ENCODE measurements at regions of chr11 and their contacts with region 1.

Region 1: DNA sequence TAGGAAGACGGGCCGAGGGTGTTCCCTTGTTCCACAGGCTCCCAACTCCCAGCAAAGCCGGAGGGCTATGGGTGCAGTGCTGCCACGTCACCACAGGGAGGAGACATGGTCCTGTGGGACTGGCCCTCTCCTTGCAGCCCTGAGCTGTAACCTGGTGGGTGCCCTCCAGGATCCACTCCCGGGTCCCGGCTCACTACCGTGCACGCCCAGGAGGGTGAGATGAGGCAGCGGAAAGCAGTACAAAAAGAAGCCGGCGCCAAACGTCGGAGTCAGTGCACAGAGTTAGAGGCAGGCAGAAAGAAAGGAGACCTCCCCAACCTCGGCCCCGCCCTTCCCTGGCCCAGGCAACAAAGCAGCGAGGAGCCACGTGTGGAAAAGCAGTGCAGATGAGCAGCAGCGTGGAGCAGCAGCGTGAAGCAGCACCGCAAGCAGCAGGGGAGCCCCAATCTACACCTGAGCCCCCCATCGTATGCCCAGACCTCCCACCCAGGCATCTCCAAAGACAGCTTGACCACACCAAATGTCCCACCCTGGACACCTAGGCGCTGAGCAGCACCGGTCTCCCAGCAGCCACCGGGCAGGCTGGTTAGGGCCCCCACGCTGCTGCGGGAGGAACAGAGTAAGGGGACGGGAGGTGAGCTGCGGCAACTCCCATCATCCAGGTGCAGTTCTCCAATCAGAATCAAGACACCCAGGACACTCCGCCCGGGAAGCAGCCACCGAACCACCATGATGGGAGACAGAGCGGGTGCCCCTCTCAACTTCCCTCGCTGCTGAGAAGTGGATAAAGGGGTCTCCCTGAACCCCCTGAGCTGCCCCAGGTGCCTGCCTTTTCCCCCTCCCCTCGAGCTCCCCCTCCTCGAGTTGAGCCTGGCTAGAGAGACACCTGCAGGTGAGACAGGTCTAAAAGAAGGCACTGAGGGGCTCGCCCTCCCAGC is 28.8 kb downstream of the IGSF9B start:
- DNase-seq: peak; percentile 47 to 91 (median 78)
- ATAC-seq: peak; percentile 88 to 97 (median 95)
- H3K4me3 ChIP-seq: peak overlapping the region in 1 of 4 donors; percentile 22
- H3K27ac ChIP-seq: no peak overlapping the region
- H3K4me1 ChIP-seq: peaks cover 0 to 4% (median 0%) of the 10 kb centered on the region in 3 donors
- H3K27me3 ChIP-seq: no peaks in the 10 kb centered on the region
- CTCF ChIP-seq: peak; percentile 67 to 88 (median 80)

Region 2: GRCh38 chr11:134139873-134140331 is 211.9 kb after region 1 on chr11:
- intact Hi-C with region 1: loop called (anchors 5 to 10 kb)
- DNase-seq: peak in 3 of 6 donors; percentile 24 to 65 (median 29)
- ATAC-seq: peak; percentile 56 to 96 (median 96)
- H3K4me3 ChIP-seq: no peak overlapping the region
- H3K27ac ChIP-seq: no peak overlapping the region
- H3K4me1 ChIP-seq: no peaks in the 10 kb centered on the region
- H3K27me3 ChIP-seq: no peaks in the 10 kb centered on the region
- CTCF ChIP-seq: peak; percentile 52 to 71 (median 68)